ENCODE measurements at regions of chr21 and their contacts with region 1.

Region 1: DNA sequence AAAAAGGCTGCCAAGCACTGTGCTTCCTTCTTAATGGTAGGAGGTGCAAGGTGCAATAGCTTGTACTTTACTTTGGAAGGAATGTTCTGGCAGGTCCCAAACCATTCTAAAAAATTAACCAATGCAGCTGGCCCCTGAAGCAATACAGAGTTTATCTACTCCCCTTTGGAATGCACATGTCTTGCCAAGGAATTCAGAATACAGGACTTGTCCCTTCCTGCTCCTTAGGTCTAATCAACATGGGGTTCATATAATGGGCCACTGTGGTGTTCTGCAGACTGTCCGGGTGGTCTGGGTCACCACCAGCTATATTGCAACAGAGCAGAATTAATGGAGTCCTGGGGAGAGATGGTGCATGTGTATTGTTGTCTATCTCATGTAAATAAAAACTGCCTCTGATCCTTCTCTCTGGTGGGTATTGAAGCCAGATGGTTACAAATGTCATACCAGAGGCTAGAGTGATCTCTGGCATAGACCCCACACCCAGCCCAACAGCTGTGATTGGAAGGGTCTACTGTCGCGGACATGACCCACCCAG is 112.8 kb downstream of the RIPK4 start:
- DNase-seq: peak; percentile 60
- H3K4me3 ChIP-seq: no peak overlapping the region
- H3K27ac ChIP-seq: peak overlapping the region; percentile 21
- H3K4me1 ChIP-seq: peaks cover 39% of the 10 kb centered on the region
- H3K27me3 ChIP-seq: no peaks in the 10 kb centered on the region
- CTCF ChIP-seq: no peak

Region 2: GRCh38 chr21:41630249-41630648 is 23.8 kb before region 1 on chr21:
- CTCF ChIA-PET with region 1: interaction called, 3 read pairs
- dilution Hi-C with region 1: no loop called
- in situ Hi-C with region 1: no loop called
- intact Hi-C with region 1: loop called (anchors 2 kb)
- DNase-seq: peak; percentile 99
- H3K4me3 ChIP-seq: no peak overlapping the region
- H3K27ac ChIP-seq: peak overlapping the region; percentile 78
- H3K4me1 ChIP-seq: peaks cover 49% of the 10 kb centered on the region
- H3K27me3 ChIP-seq: no peaks in the 10 kb centered on the region
- CTCF ChIP-seq: no peak

Region 3: GRCh38 chr21:41977034-41977950 is 323.3 kb after region 1 on chr21:
- CTCF ChIA-PET with region 1: no interaction called
- dilution Hi-C with region 1: no loop called
- in situ Hi-C with region 1: no loop called
- intact Hi-C with region 1: no loop called
- DNase-seq: no peak
- H3K4me3 ChIP-seq: no peak overlapping the region
- H3K27ac ChIP-seq: no peak overlapping the region
- H3K4me1 ChIP-seq: peaks cover 6% of the 10 kb centered on the region
- H3K27me3 ChIP-seq: no peaks in the 10 kb centered on the region
- CTCF ChIP-seq: no peak